ENCODE measurements at regions of chr1 and their contacts with region 1.

Region 1: GRCh38 chr1:231818337-231818736 is 191.7 kb downstream of the DISC1 start:
- DNase-seq: peak; percentile 30
- H3K4me3 ChIP-seq: no peak overlapping the region
- H3K27ac ChIP-seq: peak overlapping the region; percentile 59
- H3K4me1 ChIP-seq: peaks cover 65% of the 10 kb centered on the region
- H3K27me3 ChIP-seq: no peaks in the 10 kb centered on the region
- CTCF ChIP-seq: no peak

Region 2: DNA sequence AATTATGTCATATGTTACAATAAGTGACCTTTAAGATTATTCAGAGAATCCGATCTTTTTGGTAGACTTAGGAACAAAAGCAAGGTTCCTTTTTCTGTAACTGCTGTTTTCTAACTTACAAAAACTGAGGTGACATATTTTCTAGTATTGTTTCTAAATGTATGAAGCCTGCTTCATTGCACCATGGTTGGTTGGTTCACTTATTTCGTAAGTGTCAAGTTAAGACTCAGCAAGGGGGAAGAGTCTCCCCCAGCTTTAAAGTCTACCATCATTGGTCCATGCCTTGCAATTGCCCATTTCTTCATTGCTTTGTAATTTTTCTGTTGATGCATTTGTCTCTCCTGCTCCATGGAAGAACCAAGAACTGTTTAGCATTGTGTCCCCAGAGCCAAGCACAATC is 54.9 kb before region 1 on chr1:
- intact Hi-C with region 1: loop called (anchors 10 kb)
- DNase-seq: no peak
- H3K4me3 ChIP-seq: no peak overlapping the region
- H3K27ac ChIP-seq: no peak overlapping the region
- H3K4me1 ChIP-seq: no peaks in the 10 kb centered on the region
- H3K27me3 ChIP-seq: no peaks in the 10 kb centered on the region
- CTCF ChIP-seq: no peak

Region 3: GRCh38 chr1:231800108-231800507 is 18.2 kb before region 1 on chr1:
- intact Hi-C with region 1: loop called (anchors 2 kb)
- DNase-seq: no peak
- H3K4me3 ChIP-seq: no peak overlapping the region
- H3K27ac ChIP-seq: no peak overlapping the region
- H3K4me1 ChIP-seq: peaks cover 8% of the 10 kb centered on the region
- H3K27me3 ChIP-seq: no peaks in the 10 kb centered on the region
- CTCF ChIP-seq: no peak

Measured in left ventricle myocardium inferior (tissue), 1 donor.